Activated CD4-positive, alpha-beta T cell treated with anti-CD3 and anti-CD28 coated beads for 36 hours (primary cell): ENCODE measurements at regions of chr7 and their contacts with region 1.

Region 1: DNA sequence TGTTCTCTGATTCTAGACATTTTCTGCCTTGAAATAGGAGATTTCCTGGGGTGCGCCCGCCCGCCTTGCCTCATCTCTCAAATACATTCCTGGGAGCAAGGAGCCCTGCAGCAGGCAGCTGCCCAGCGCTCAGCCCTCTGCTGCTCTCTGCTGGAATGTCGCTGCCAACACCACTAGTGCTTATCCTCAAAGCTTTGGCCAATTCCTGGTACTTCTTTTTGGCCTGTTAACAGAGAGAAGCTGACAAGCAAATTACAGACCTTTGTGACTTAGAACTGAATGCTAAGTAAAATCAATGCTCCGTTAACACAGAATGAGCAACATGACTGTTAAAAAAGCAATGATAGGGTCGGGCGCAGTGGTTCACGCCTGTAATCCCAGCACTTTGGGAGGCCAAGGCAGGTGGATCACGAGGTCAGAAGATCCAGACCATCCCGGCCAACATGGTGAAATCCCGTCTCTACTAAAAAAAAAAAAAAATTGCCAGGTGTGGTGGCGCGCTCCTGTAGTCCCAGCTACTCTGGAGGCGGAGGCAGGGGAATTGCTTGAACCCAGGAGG is 41.9 kb upstream of the SYPL1 start:
- DNase-seq: peak; percentile 84
- ATAC-seq: peak; percentile 96
- H3K4me3 Mint-ChIP-seq: no peak overlapping the region
- H3K27ac Mint-ChIP-seq: no peak overlapping the region
- H3K4me1 Mint-ChIP-seq: peaks cover 6% of the 10 kb centered on the region
- H3K27me3 Mint-ChIP-seq: peaks cover 18% of the 10 kb centered on the region

Region 2: GRCh38 chr7:106041140-106041717 is 112.7 kb before region 1 on chr7:
- CTCF ChIA-PET with region 1: interaction called, 36 read pairs
- POLR2A ChIA-PET with region 1: no interaction called
- intact Hi-C with region 1: no loop called
- DNase-seq: peak; percentile 59
- ATAC-seq: peak; percentile 42
- H3K4me3 Mint-ChIP-seq: no peak overlapping the region
- H3K27ac Mint-ChIP-seq: no peak overlapping the region
- H3K4me1 Mint-ChIP-seq: peaks cover 31% of the 10 kb centered on the region
- H3K27me3 Mint-ChIP-seq: no peaks in the 10 kb centered on the region

Region 3: GRCh38 chr7:106056513-106057203 is 97.3 kb before region 1 on chr7:
- CTCF ChIA-PET with region 1: interaction called, 116 read pairs
- POLR2A ChIA-PET with region 1: no interaction called
- intact Hi-C with region 1: loop called (anchors 1 kb)
- DNase-seq: peak; percentile 84
- ATAC-seq: peak; percentile 97
- H3K4me3 Mint-ChIP-seq: no peak overlapping the region
- H3K27ac Mint-ChIP-seq: no peak overlapping the region
- H3K4me1 Mint-ChIP-seq: peaks cover 16% of the 10 kb centered on the region
- H3K27me3 Mint-ChIP-seq: no peaks in the 10 kb centered on the region

Region 4: GRCh38 chr7:106134241-106134640 is 19.7 kb before region 1 on chr7:
- CTCF ChIA-PET with region 1: interaction called, 18 read pairs
- POLR2A ChIA-PET with region 1: no interaction called
- intact Hi-C with region 1: no loop called
- DNase-seq: no peak
- ATAC-seq: no peak
- H3K4me3 Mint-ChIP-seq: no peak overlapping the region
- H3K27ac Mint-ChIP-seq: no peak overlapping the region
- H3K4me1 Mint-ChIP-seq: no peaks in the 10 kb centered on the region
- H3K27me3 Mint-ChIP-seq: no peaks in the 10 kb centered on the region